Motor neuron (in vitro differentiated cells): ENCODE measurements at regions of chr18 and their contacts with region 1.

Region 1: DNA sequence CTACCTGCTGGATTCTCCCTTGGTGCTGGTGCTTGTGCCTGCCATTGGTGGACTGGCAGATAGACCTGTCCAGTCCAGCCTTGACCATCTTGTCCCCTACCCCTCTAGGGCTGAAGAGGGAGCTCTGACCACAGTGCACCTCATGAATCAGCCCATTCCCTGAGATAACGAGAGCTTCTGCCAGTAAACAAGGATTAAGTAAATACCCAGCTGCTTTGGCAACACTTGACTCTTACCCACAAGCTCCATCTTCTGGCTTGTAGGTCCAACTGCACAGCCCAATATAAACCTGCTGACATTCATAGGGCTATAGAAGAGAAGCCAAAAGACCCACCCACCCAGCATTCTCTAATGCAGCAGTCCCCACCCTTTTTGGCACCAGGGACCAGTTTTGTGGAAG is 186.4 kb downstream of the PIK3C3 start:
- ATAC-seq: peak in 2 of 8 experiments; percentile 20 to 48
- H3K4me3 ChIP-seq: no peak overlapping the region
- H3K27ac ChIP-seq: no peak overlapping the region
- H3K4me1 ChIP-seq: peaks cover 20 to 21% of the 10 kb centered on the region in 2 donors

Region 2: DNA sequence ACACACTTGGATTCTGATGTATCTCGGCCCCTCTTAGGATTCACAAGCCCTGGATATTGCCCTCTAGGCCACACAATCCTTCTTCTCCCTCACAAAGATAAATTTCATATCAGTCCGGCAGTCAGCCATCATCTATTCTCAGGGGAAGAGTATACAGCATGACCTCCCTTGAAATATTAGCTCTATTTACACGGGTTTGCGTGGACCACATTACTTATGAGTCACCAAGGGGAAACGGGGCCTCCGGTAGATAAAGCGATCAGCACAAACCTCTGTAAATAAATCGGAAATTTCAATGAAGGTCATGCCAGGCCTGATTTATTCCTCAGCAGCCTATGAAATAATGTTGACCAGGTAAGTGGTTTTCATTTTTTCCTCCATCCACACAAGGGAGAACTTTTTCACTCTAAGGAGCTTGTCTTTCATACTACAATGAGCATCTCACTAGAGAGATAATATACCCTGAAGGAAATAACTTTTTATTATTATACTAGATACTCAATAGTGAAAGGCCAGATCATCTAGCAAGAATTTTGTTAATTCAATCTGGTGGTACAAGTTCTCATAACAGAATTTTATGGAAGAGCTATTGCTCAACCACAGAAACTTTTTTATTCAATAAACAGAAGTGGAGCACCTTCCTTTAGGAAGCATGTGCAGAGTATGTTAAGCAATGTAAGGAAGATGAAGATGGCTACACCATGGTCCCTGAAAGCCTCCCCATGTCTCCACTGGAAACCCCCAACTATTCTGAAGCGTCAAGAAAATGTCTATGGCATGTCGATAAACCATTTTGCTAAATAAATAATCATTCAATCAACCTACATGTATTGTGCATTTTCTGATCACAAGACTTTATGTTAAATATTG is 311.6 kb before region 1 on chr18:
- in situ Hi-C with region 1: no loop called
- ATAC-seq: peak in 5 of 8 experiments; percentile 98 to 100 (median 99)
- H3K4me3 ChIP-seq: no peak overlapping the region
- H3K27ac ChIP-seq: no peak overlapping the region
- H3K4me1 ChIP-seq: peaks cover 0 to 14% of the 10 kb centered on the region in 2 donors

Region 3: DNA sequence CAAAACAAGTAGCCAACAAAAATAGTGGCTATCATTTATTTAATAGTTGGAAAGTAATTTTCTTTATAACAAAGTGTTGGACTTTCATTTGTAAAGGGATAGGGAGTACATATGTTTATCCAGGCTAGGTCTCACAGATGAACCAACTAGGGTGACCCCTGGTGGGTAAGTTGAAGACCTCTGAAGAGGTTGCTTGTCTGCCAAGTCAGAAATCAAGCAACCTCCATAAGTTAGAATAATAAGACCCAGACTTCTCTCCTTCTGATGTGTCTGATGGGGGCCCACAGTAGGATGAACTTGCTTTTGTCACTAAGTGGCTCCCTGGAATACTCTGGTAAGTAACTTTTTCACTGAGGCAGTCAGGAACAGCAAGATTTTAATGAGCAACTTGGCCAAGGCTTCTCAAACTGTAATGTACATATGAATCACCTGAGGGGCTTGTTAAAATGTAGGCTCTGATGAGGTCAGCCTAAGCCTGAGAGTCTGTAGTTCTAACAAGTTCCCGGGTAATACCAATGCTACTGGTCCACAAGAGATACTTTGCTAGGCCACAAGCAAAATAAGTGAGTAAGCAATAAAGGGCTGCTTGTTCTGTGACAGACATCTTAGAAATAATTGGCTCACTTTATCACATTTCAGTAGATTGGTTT is 133.2 kb after region 1 on chr18:
- in situ Hi-C with region 1: loop called in 1 of 9 experiments (anchors 25 kb)
- ATAC-seq: peak in 4 of 8 experiments; percentile 31 to 83 (median 58)
- H3K4me3 ChIP-seq: no peak overlapping the region
- H3K27ac ChIP-seq: no peak overlapping the region
- H3K4me1 ChIP-seq: peaks cover 23 to 37% of the 10 kb centered on the region in 2 donors

Region 4: GRCh38 chr18:42706618-42707017 is 565.2 kb after region 1 on chr18:
- in situ Hi-C with region 1: loop called in 1 of 9 experiments (anchors 25 kb)
- ATAC-seq: peak in 5 of 8 experiments; percentile 34 to 99 (median 92)
- H3K4me3 ChIP-seq: no peak overlapping the region
- H3K27ac ChIP-seq: no peak overlapping the region
- H3K4me1 ChIP-seq: peaks cover 0 to 7% of the 10 kb centered on the region in 2 donors